ENCODE measurements at regions of chr1 and their contacts with region 1.

Region 1: DNA sequence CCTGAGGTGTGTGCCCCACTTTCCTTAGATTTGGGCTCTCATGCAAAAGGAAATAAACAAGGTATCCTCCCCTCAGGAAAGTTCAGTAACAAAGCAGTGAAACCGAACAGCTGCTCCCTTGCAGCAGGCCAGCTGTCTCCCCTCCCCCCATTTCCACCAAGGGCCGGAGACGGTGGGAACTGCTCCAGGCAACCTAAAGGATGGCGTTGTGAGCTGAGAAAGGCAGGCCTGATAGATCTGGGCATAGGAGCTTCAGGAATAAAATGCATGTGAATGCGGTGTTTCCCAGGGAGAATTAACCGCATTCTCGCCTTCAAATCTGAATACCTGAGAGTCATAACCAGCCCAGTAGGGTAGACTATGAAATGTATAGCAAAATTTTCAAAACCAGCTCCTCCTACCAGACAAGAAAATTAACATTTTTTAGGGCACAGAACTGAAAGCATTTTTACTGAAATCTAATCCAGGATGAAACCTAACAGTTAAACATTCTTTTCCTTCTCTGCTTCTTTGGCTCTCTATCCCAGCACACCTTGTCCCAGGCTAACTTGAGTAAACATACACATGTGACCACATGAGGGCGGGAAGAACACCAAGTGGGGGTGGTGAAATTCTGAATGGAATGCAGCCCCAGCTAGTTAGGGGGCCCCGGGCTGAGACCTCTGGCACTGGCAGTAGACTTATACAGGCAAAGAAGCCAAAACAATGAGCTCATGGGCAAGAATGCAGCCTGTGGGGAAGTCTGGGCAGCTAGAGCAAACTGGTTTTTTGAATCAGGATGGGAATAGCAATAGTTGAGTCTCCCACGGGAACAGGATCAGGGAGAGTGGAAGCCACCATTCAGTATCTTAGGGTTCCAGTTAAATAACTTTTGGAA is 11.5 kb downstream of the MCL1 start:
- DNase-seq: peak; percentile 84
- H3K4me3 ChIP-seq: peak overlapping the region in 3 of 4 donors; percentile 3 to 41 (median 15)
- H3K27ac ChIP-seq: peak overlapping the region; percentile 98 to 99 (median 98)
- H3K4me1 ChIP-seq: peaks cover 75 to 100% (median 89%) of the 10 kb centered on the region in 4 donors
- H3K27me3 ChIP-seq: no peaks in the 10 kb centered on the region
- CTCF ChIP-seq: no peak
- EP300 ChIP-seq: peak; percentile 95
- POLR2A ChIP-seq: peak; percentile 27

Region 2: GRCh38 chr1:150515328-150516048 is 52.5 kb before region 1 on chr1 and contains the start of gene FALEC:
- in situ Hi-C with region 1: no loop called
- intact Hi-C with region 1: no loop called
- DNase-seq: peak; percentile 97
- H3K4me3 ChIP-seq: peak within 1 kb of the TSS; percentile 12 to 64 (median 54)
- H3K27ac ChIP-seq: peak within 1 kb of the TSS; percentile 76 to 91 (median 89)
- H3K4me1 ChIP-seq: peaks cover 7 to 25% (median 13%) of the 10 kb centered on the region in 4 donors
- H3K27me3 ChIP-seq: no peaks in the 10 kb centered on the region
- CTCF ChIP-seq: peak in 2 of 5 experiments; percentile 6 to 8
- EP300 ChIP-seq: no peak
- POLR2A ChIP-seq: peak; percentile 47
- total RNA-seq, gene FALEC: not detected

Region 3: GRCh38 chr1:150613061-150613920 is 45.3 kb after region 1 on chr1:
- in situ Hi-C with region 1: loop called in 3 of 4 experiments (anchors 5 to 10 kb)
- intact Hi-C with region 1: loop called (anchors 5 kb)
- DNase-seq: peak; percentile 69
- H3K4me3 ChIP-seq: peak overlapping the region in 1 of 4 donors; percentile 0
- H3K27ac ChIP-seq: peak overlapping the region; percentile 88 to 94 (median 90)
- H3K4me1 ChIP-seq: peaks cover 39 to 71% (median 53%) of the 10 kb centered on the region in 4 donors
- H3K27me3 ChIP-seq: no peaks in the 10 kb centered on the region
- CTCF ChIP-seq: no peak
- EP300 ChIP-seq: peak; percentile 88
- POLR2A ChIP-seq: no peak

Region 4: DNA sequence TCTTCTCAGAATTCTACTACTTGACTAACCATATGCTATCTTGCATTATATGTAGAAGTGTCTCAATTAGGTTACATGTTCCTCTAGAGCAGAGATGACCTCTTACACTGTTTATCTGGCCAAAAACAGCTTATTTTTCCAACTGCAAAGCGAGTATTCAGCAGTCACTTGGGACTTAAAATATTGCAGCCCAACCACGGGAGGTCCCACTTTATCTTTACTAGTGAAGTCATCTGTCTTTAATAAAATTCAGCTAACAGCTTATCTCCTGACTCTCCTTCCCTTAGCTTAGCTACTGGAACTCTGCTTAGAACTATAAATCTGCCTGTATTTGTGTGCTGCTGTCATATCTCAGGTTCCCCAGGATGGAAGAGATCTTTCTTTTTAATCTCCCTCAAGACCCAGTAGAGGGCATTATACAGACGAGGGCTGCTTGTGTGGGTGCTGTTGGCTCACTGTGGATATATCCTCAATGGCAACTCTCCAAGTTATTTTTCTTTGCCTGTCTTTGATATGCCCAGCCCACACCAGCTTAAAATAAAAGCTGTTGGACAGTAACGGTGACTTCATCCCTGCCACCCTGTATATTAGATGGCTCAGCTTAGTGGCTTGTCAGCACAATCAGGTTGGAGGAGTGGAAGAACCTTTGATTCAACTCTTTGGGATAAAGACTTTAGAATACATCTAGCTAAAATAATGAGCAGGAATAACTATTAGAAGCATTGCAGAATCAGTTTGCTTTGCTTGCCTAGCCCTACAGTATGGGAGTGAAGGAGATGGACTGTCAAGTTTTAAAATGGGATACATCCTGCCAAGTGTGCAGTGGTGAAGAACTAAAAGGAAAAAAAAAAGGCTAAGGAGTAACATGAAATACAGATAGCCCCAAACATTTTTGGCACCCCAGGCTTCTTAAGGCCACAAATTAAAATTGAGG is 51.9 kb after region 1 on chr1:
- in situ Hi-C with region 1: loop called in 2 of 4 experiments (anchors 5 to 10 kb)
- intact Hi-C with region 1: loop called (anchors 5 kb)
- DNase-seq: no peak
- H3K4me3 ChIP-seq: no peak overlapping the region
- H3K27ac ChIP-seq: peak overlapping the region; percentile 73 to 80 (median 75)
- H3K4me1 ChIP-seq: peaks cover 18 to 51% (median 30%) of the 10 kb centered on the region in 4 donors
- H3K27me3 ChIP-seq: no peaks in the 10 kb centered on the region
- CTCF ChIP-seq: peak in 3 of 5 experiments; percentile 17 to 47 (median 27)
- EP300 ChIP-seq: no peak
- POLR2A ChIP-seq: no peak

Region 5: GRCh38 chr1:151008190-151008860 is 440.4 kb after region 1 on chr1 and contains the start of gene PRUNE1:
- in situ Hi-C with region 1: no loop called
- intact Hi-C with region 1: no loop called
- DNase-seq: peak; percentile 99
- H3K4me3 ChIP-seq: peak within 1 kb of the TSS; percentile 57 to 86 (median 62)
- H3K27ac ChIP-seq: peak within 1 kb of the TSS; percentile 89 to 96 (median 92)
- H3K4me1 ChIP-seq: peaks cover 47 to 80% (median 56%) of the 10 kb centered on the region in 4 donors
- H3K27me3 ChIP-seq: no peaks in the 10 kb centered on the region
- CTCF ChIP-seq: peak in 1 of 5 experiments; percentile 28
- EP300 ChIP-seq: no peak
- POLR2A ChIP-seq: peak; percentile 48
- total RNA-seq, gene PRUNE1: 9.0 to 80.4 (median 26.8) TPM

Measured in transverse colon (tissue), 4 donors.